ENCODE measurements at regions of chr11 and their contacts with region 1.

Region 1: GRCh38 chr11:67663923-67664692 is 10.3 kb downstream of the ALDH3B2 start:
- DNase-seq: no peak
- ATAC-seq: no peak
- H3K4me3 ChIP-seq: no peak overlapping the region
- H3K27ac ChIP-seq: no peak overlapping the region
- H3K4me1 ChIP-seq: no peaks in the 10 kb centered on the region
- H3K27me3 ChIP-seq: peaks cover 0 to 2% (median 0%) of the 10 kb centered on the region in 3 donors
- CTCF ChIP-seq: no peak
- POLR2A ChIP-seq: no peak

Region 2: DNA sequence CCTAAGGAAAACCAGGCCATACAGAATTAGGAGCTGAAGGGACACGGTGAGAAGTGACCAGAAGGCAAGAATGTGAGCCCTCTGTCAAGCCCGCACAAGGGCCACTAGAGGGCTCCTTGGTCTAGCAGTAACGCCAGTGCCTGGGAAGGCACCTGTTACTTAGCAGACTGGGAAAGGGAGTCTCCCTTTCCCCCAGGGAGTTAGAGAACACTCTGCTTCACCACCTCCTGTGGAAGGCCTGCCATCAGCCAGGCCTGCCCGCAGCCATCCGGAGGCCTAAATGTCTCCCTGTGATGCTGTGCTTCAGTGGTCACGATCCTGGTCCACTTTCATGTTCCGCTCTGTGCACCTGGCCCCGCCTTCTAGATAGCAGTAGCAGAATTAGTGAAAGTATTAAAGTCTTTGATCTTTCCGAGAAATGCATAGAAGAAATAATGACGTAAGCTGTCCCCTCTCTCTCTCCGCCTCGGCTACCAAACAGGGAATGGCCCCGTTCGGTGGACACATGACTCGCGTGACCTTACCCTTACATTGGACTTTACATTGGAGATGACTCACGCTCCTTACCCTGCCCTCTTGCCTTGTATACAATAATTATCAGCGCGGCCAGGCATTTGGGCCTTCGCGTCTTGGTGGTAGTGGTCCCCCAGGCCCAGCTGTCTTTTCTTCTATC is 91.2 kb before region 1 on chr11:
- in situ Hi-C with region 1: loop called in 1 of 4 experiments (anchors 5 kb)
- intact Hi-C with region 1: loop called (anchors 2 kb)
- DNase-seq: peak; percentile 37 to 78
- ATAC-seq: peak; percentile 52 to 80
- H3K4me3 ChIP-seq: no peak overlapping the region
- H3K27ac ChIP-seq: peak overlapping the region in 2 of 4 donors; percentile 39 to 41
- H3K4me1 ChIP-seq: no peaks in the 10 kb centered on the region
- H3K27me3 ChIP-seq: no peaks in the 10 kb centered on the region
- CTCF ChIP-seq: peak; percentile 71 to 88 (median 76)
- POLR2A ChIP-seq: no peak

Region 3: GRCh38 chr11:67640021-67640757 is 23.9 kb before region 1 on chr11:
- in situ Hi-C with region 1: no loop called
- intact Hi-C with region 1: no loop called
- DNase-seq: peak in 1 of 2 donors; percentile 53
- ATAC-seq: peak; percentile 53 to 60
- H3K4me3 ChIP-seq: no peak overlapping the region
- H3K27ac ChIP-seq: no peak overlapping the region
- H3K4me1 ChIP-seq: no peaks in the 10 kb centered on the region
- H3K27me3 ChIP-seq: peaks cover 6 to 15% (median 9%) of the 10 kb centered on the region in 3 donors
- CTCF ChIP-seq: peak in 3 of 5 experiments; percentile 44 to 57 (median 55)
- POLR2A ChIP-seq: no peak

Measured in gastrocnemius medialis (tissue), 4 donors.